MCF 10A (cell line): ENCODE measurements at regions of chr6 and their contacts with region 1.

Region 1: GRCh38 chr6:56708810-56709597 is 66.3 kb upstream of the DST start:
- DNase-seq: peak; percentile 59
- H3K4me3 Mint-ChIP-seq: peak overlapping the region; percentile 45
- H3K27ac Mint-ChIP-seq: peak overlapping the region; percentile 53
- H3K4me1 Mint-ChIP-seq: peaks cover 31% of the 10 kb centered on the region
- H3K27me3 Mint-ChIP-seq: no peaks in the 10 kb centered on the region
- CTCF ChIP-seq: peak; percentile 24

Region 2: GRCh38 chr6:56637640-56638039 is 71.4 kb before region 1 on chr6:
- CTCF ChIA-PET with region 1: interaction called, 3 read pairs
- POLR2A ChIA-PET with region 1: interaction called, 13 read pairs
- intact Hi-C with region 1: no loop called
- DNase-seq: peak; percentile 77
- H3K4me3 Mint-ChIP-seq: peak overlapping the region; percentile 88
- H3K27ac Mint-ChIP-seq: peak overlapping the region; percentile 97
- H3K4me1 Mint-ChIP-seq: peaks cover 35% of the 10 kb centered on the region
- H3K27me3 Mint-ChIP-seq: no peaks in the 10 kb centered on the region
- CTCF ChIP-seq: peak; percentile 48

Region 3: GRCh38 chr6:56730663-56731529 is 21.9 kb after region 1 on chr6:
- CTCF ChIA-PET with region 1: interaction called, 17 read pairs
- POLR2A ChIA-PET with region 1: interaction called, 133 read pairs
- intact Hi-C with region 1: loop called (anchors 2 kb)
- DNase-seq: peak; percentile 60
- H3K4me3 Mint-ChIP-seq: no peak overlapping the region
- H3K27ac Mint-ChIP-seq: peak overlapping the region; percentile 92
- H3K4me1 Mint-ChIP-seq: peaks cover 70% of the 10 kb centered on the region
- H3K27me3 Mint-ChIP-seq: no peaks in the 10 kb centered on the region
- CTCF ChIP-seq: no peak

Region 4: GRCh38 chr6:56757588-56757984 is 48.6 kb after region 1 on chr6:
- CTCF ChIA-PET with region 1: interaction called, 404 read pairs
- POLR2A ChIA-PET with region 1: interaction called, 192 read pairs
- intact Hi-C with region 1: loop called (anchors 1 kb)
- DNase-seq: peak; percentile 69
- H3K4me3 Mint-ChIP-seq: no peak overlapping the region
- H3K27ac Mint-ChIP-seq: no peak overlapping the region
- H3K4me1 Mint-ChIP-seq: peaks cover 21% of the 10 kb centered on the region
- H3K27me3 Mint-ChIP-seq: no peaks in the 10 kb centered on the region
- CTCF ChIP-seq: peak; percentile 66

Region 5: GRCh38 chr6:56851541-56852259 is 142.7 kb after region 1 on chr6:
- CTCF ChIA-PET with region 1: interaction called, 142 read pairs
- POLR2A ChIA-PET with region 1: interaction called, 24 read pairs
- intact Hi-C with region 1: loop called (anchors 1 kb)
- DNase-seq: peak; percentile 86
- H3K4me3 Mint-ChIP-seq: peak overlapping the region; percentile 81
- H3K27ac Mint-ChIP-seq: peak overlapping the region; percentile 56
- H3K4me1 Mint-ChIP-seq: peaks cover 35% of the 10 kb centered on the region
- H3K27me3 Mint-ChIP-seq: no peaks in the 10 kb centered on the region
- CTCF ChIP-seq: peak; percentile 57

Region 6: DNA sequence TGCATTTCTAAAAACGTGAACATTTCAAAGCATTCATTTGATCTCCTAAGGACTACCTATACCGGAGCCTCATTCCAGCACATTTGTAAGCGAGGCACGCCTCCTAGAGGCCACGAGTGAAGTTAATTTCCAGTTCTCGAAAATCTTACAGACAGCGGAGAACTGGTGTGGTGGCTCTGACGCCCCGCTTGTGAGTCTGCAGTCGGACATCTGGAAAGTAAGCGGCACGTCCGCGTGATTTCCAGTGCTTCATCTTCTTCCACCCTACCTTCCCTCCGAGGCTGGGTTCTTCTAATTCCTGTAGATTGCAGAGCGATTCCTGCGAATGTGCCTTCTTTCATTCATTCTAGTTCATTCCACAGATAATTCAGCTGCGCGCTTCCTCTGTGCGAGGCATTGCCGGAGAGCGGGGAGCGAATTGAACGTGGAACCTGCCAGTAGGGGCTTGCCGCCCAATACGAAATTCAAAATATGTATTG is 607.6 kb after region 1 on chr6:
- CTCF ChIA-PET with region 1: interaction called, 3 read pairs
- POLR2A ChIA-PET with region 1: no interaction called
- intact Hi-C with region 1: loop called (anchors 10 kb)
- DNase-seq: peak; percentile 94
- H3K4me3 Mint-ChIP-seq: peak overlapping the region; percentile 95
- H3K27ac Mint-ChIP-seq: peak overlapping the region; percentile 88
- H3K4me1 Mint-ChIP-seq: peaks cover 32% of the 10 kb centered on the region
- H3K27me3 Mint-ChIP-seq: no peaks in the 10 kb centered on the region
- CTCF ChIP-seq: peak; percentile 82

Region 7: GRCh38 chr6:58290177-58290576 is 1581.2 kb after region 1 on chr6:
- CTCF ChIA-PET with region 1: no interaction called
- POLR2A ChIA-PET with region 1: no interaction called
- intact Hi-C with region 1: no loop called
- DNase-seq: peak; percentile 17
- H3K4me3 Mint-ChIP-seq: no peak overlapping the region
- H3K27ac Mint-ChIP-seq: peak overlapping the region; percentile 50
- H3K4me1 Mint-ChIP-seq: peaks cover 21% of the 10 kb centered on the region
- H3K27me3 Mint-ChIP-seq: no peaks in the 10 kb centered on the region
- CTCF ChIP-seq: no peak